ENCODE measurements at regions of chr4 and their contacts with region 1.

Region 1: GRCh38 chr4:156968479-156968984 is 3.1 kb downstream of the PDGFC start:
- DNase-seq: peak; percentile 64 to 86 (median 71)
- H3K4me3 ChIP-seq: peak overlapping the region in 2 of 4 donors; percentile 62 to 87
- H3K27ac ChIP-seq: peak overlapping the region in 1 of 5 donors; percentile 88
- H3K4me1 ChIP-seq: peaks cover 7 to 23% of the 10 kb centered on the region in 2 donors
- H3K27me3 ChIP-seq: no peaks in the 10 kb centered on the region
- CTCF ChIP-seq: peak; percentile 70 to 82 (median 78)
- POLR2A ChIP-seq: no peak

Region 2: DNA sequence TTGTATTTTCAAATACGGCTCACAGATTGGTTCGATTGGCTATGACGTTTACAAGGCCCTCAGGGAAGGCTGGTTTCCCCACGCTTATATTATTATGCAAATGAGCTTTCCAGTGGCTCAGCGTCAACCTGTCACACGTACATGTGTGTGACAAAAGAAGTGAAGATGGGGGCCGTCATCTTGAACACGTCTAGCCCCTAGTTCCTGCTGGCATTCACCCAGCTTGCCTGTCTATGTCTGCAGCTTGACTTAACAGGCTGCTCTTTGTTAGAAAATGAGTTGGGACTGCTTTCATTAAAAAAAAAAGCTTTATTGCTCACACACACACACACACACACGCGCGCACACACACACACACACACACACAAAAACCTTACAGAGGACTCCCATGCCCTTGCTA is 731.3 kb before region 1 on chr4:
- intact Hi-C with region 1: no loop called
- DNase-seq: no peak
- H3K4me3 ChIP-seq: no peak overlapping the region
- H3K27ac ChIP-seq: no peak overlapping the region
- H3K4me1 ChIP-seq: no peaks in the 10 kb centered on the region
- H3K27me3 ChIP-seq: no peaks in the 10 kb centered on the region
- CTCF ChIP-seq: no peak
- POLR2A ChIP-seq: no peak

Region 3: GRCh38 chr4:156838761-156839160 is 129.8 kb before region 1 on chr4:
- intact Hi-C with region 1: loop called in 1 of 2 experiments (anchors 10 kb)
- DNase-seq: no peak
- H3K4me3 ChIP-seq: no peak overlapping the region
- H3K27ac ChIP-seq: no peak overlapping the region
- H3K4me1 ChIP-seq: peaks cover 0 to 18% of the 10 kb centered on the region in 2 donors
- H3K27me3 ChIP-seq: no peaks in the 10 kb centered on the region
- CTCF ChIP-seq: no peak
- POLR2A ChIP-seq: no peak